PC-3 (cell line): ENCODE measurements at regions of chr4 and their contacts with region 1.

Region 1: DNA sequence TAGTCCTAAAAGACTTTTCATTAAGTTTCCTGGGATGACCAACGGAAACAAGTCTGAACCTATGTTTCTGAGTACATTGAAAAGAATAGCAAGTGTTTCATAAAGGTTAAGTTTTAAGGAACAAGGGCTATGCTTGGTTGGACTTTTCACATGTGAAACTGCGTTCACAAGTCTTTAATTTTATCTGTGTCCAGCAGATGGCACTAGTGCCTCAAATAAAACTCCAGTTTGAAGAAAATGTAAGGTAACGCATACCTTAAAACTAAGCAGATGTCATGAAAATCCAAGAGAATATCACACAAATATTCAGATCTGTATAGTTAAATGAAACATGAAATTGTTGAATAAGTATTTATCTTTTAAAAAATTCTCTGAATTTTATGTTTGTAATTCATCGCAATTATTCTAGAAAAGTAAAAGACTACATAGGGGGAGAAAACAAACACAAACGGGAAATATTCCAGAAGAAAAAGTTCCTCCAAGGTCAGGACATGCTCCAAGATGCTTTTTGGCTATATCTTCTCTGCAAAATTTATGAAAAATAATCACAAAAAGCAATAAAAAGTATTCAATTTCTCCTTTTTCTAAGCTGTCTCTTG is 89.6 kb upstream of the MAD2L1 start:
- DNase-seq: peak; percentile 75
- ATAC-seq: no peak
- H3K4me3 ChIP-seq: no peak overlapping the region
- H3K27ac ChIP-seq: no peak overlapping the region
- H3K4me1 ChIP-seq: no peaks in the 10 kb centered on the region
- H3K27me3 ChIP-seq: peaks cover 4% of the 10 kb centered on the region; the same call in 1 of the 2 replicates
- CTCF ChIP-seq: peak; percentile 69

Region 2: DNA sequence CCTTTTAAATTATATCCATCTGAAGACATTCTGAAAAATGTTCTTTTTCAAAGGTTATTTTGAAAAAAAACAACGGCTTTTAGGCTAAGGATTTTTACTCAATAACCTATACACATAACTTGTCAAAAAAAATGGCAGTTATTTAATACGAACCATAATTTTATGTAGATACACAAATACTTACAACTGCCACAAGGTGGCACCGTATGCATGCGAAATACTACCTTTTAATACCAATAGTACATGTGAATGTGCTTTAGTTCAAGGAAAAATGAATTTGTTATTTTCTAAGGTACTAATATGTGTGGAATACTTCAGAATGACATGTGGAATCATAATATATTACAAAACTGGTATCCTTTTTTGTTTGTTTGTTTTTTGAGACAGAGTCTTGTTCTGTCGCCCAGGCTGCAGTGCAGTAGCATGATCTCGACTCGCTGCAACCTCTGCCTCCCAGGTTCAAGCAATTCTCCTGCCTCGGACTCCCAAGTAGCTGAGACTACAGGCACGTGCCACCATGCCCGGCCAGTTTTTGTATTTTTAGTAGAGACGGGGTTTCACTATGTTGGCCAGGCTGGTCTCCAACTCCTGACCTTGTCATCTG is 84.9 kb before region 1 on chr4:
- CTCF ChIA-PET with region 1: no interaction called
- POLR2A ChIA-PET with region 1: no interaction called
- intact Hi-C with region 1: loop called (anchors 2 kb)
- DNase-seq: peak; percentile 70
- ATAC-seq: no peak
- H3K4me3 ChIP-seq: no peak overlapping the region
- H3K27ac ChIP-seq: no peak overlapping the region
- H3K4me1 ChIP-seq: peaks cover 18% of the 10 kb centered on the region
- H3K27me3 ChIP-seq: no peaks in the 10 kb centered on the region
- CTCF ChIP-seq: peak; percentile 73

Region 3: DNA sequence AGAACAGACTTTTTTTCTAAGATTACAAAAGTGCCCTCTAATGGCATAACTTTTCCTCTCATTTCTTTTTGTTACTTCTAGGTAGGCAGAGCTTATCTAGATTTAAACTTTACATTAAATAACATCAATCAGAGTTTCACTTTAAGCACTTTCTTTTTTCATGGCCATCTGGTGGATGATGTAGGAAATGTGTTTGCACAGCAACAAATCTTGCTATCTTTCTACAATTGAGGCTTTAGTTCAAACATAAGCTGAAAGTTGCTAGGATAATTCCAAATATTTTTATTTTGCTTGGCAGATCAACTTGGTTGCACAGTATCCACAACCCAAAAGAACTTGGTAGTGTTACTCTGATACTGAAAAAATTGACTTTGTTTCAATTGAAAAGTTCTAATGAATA is 894.1 kb after region 1 on chr4:
- CTCF ChIA-PET with region 1: no interaction called
- POLR2A ChIA-PET with region 1: no interaction called
- intact Hi-C with region 1: loop called (anchors 1 kb)
- DNase-seq: peak; percentile 20
- ATAC-seq: peak; percentile 42
- H3K4me3 ChIP-seq: no peak overlapping the region
- H3K27ac ChIP-seq: no peak overlapping the region
- H3K4me1 ChIP-seq: peaks cover 9% of the 10 kb centered on the region; the same call in 1 of the 2 replicates
- H3K27me3 ChIP-seq: no peaks in the 10 kb centered on the region
- CTCF ChIP-seq: peak; percentile 47

Region 4: DNA sequence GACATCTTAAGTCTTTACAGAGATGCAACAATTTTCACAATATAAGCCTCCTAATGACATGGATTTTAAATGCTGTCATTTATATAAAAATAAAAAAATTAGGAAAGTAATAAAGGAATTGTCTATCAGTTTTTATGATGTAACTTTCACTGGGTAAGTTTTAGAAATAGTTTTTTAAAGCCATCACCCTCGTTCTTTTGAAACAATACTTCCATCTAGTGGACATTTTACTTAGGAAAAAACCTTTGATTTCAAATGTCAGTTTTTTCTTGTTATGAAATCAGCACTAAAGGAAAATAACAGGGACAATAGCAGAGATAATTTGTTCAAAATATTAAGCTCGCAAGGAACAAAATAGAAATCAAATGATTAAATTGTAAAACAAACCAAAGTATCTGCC is 940.4 kb after region 1 on chr4:
- CTCF ChIA-PET with region 1: no interaction called
- POLR2A ChIA-PET with region 1: no interaction called
- intact Hi-C with region 1: loop called (anchors 1 kb)
- DNase-seq: peak; percentile 50
- ATAC-seq: no peak
- H3K4me3 ChIP-seq: no peak overlapping the region
- H3K27ac ChIP-seq: peak overlapping the region; percentile 20; the same call in 1 of the 2 replicates
- H3K4me1 ChIP-seq: no peaks in the 10 kb centered on the region
- H3K27me3 ChIP-seq: no peaks in the 10 kb centered on the region
- CTCF ChIP-seq: peak; percentile 61

Region 5: DNA sequence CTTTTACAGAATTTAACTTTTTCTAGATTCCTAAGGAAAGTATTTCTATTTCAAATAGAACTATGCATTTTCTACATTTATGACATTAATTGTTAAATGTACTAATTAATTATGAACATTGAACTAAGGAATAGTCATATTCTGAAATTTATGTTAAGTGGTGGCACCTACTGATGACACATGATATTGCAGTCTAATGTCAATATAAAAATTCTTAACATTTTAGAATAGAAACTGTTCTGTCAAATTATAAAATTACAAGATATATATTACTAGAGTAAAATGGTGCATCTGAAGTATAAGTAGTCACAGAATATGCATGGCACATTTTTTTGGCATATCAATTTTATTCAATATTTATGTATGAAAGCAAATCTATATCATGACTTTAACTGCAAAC is 956.3 kb after region 1 on chr4:
- CTCF ChIA-PET with region 1: no interaction called
- POLR2A ChIA-PET with region 1: no interaction called
- intact Hi-C with region 1: loop called (anchors 5 kb)
- DNase-seq: no peak
- ATAC-seq: no peak
- H3K4me3 ChIP-seq: no peak overlapping the region
- H3K27ac ChIP-seq: no peak overlapping the region
- H3K4me1 ChIP-seq: no peaks in the 10 kb centered on the region
- H3K27me3 ChIP-seq: peaks cover 27% of the 10 kb centered on the region; the same call in 1 of the 2 replicates
- CTCF ChIP-seq: peak; percentile 51

Region 6: GRCh38 chr4:121252224-121252806 is 1096.1 kb after region 1 on chr4:
- CTCF ChIA-PET with region 1: no interaction called
- POLR2A ChIA-PET with region 1: no interaction called
- intact Hi-C with region 1: loop called (anchors 2 kb)
- DNase-seq: peak; percentile 75
- ATAC-seq: peak; percentile 69
- H3K4me3 ChIP-seq: no peak overlapping the region
- H3K27ac ChIP-seq: no peak overlapping the region
- H3K4me1 ChIP-seq: no peaks in the 10 kb centered on the region
- H3K27me3 ChIP-seq: peaks cover 3% of the 10 kb centered on the region; the same call in 1 of the 2 replicates
- CTCF ChIP-seq: peak; percentile 80